ENCODE measurements at regions of chr12 and their contacts with region 1.

Region 1: DNA sequence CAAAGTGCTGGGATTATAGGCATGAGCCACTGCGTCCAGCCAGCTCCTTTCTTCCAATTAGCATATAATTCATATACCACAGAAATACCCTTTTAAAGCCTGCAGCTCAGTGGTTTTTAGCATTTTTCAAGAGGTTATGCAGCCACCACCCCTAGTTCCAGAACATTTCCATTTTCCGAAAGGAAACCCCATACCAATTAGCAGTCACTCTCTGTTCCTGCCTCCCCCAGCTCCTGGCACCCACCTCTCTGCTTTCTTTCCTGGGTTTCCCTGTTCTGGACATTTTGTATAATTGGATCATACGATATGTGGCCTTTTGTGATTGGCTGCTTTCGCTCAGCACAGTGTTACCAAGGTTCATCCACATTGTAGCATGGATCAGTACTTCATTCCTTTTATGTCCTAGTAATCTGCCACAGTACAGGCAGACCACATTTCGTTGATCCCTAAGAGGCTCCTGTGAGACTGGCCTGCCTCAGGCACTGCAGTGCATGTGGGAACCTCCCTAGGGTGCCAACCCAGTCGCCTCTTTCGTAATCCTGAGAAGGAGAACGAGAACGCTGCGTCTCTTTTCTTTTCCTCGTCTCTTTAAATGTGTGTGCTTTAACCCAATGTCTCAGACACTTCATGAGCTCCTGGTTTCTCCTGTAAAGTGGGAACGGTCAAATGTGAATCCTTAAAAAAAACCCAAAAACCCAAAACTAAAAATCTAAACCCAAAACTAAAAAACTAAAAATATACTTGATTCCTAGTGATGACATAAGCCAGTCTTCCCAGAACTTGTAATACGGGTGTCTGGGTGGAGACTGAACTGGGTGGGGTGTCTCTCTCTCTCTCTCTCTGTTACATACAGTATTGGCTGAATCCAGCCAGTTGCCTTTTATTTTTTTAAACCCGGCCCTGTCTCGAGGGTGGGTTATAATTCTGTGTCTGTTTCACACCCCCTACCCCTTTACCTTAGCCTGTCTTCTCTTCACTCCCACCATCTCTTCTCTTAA is 14.7 kb downstream of the AACS start:
- DNase-seq: no peak
- ATAC-seq: no peak
- H3K4me3 Mint-ChIP-seq: no peak overlapping the region
- H3K27ac Mint-ChIP-seq: no peak overlapping the region
- H3K4me1 Mint-ChIP-seq: no peaks in the 10 kb centered on the region
- H3K27me3 Mint-ChIP-seq: no peaks in the 10 kb centered on the region

Region 2: DNA sequence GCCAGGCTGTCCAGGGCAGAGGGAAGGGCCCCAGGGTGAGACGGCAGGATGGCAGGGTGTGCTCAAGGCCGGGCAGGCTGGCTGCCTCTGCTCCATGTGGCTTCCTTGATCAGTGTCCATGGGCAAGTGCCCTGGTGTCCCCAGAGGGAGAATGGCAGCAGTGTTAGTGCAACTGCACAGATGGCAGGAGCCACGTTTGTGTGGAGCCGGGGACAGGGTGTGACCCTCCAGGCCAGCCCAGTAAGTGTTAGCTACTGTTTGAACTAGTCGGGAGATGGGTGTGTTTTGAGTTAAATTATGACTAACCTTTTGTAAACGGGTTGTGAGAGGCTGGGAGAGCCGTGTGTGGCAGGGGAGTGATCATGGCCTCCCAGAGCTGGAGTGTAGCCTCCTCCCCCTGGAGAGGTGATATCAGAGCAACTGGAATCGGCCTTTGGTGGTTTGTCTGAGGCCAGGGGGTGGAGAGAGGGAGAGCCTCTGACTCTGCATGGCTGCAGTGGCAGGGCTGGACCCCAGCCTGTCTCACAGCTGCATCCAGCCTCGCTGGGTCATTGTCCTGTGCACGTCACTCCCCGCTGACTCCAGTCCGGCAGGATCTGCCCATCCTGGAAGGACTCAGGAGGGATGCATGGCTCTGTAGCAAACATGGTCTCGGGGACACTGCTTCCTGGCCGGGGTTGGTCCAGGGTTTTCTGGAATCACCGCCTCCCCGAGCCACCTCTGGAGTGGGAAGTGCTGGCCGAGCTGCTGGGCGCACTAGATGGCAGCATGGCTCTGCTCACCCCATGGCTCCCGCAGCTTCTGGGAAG is 13.1 kb after region 1 on chr12:
- POLR2A ChIA-PET with region 1: interaction called, 10 read pairs
- DNase-seq: no peak
- ATAC-seq: no peak
- H3K4me3 Mint-ChIP-seq: no peak overlapping the region
- H3K27ac Mint-ChIP-seq: peak overlapping the region; percentile 2
- H3K4me1 Mint-ChIP-seq: peaks cover 9% of the 10 kb centered on the region
- H3K27me3 Mint-ChIP-seq: no peaks in the 10 kb centered on the region